CD4-positive, alpha-beta T cell (primary cell): ENCODE measurements at regions of chr11 and their contacts with region 1.

Region 1: DNA sequence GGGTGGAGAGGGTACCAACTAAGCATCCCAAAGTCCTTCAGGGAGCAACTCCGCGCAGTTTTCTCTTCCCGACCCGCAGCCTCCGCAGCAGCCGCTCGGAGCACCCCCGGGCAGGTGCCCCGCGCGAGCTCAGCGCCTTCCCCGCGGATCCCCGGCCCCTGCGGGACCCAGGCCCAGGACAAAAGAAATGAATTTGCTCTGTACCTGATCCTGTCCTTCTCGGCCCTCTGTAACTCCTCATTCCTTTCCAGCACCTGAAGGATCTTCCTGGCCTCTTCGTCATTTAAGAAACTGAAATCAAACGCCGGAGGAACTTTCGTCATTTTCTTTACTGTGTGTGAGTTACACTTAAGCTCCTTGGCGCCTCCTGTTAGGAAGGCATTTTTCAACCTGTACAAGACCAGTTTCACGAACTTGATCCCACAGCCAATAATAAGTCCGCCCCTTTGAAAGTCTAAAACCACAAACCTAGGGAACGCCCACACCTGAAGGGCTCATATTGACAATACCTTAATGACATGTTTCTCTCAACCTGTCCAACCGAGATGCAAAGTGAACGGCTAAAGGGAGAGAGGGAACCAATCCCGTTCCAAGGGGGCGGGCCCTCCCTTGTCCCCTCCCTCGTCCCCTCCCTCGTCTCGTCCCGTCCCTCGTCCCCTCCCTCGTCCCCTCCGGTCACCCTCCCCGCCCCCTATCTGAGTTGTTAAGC is at the start of gene EXPH5:
- DNase-seq: peak; percentile 66 to 96 (median 87)
- ATAC-seq: peak; percentile 92
- H3K4me3 ChIP-seq: peak within 1 kb of the TSS; percentile 84
- H3K4me3 Mint-ChIP-seq: peak within 1 kb of the TSS; percentile 99
- H3K27ac ChIP-seq: peak within 1 kb of the TSS in 1 of 2 donors; percentile 37
- H3K27ac Mint-ChIP-seq: peak within 1 kb of the TSS; percentile 83
- H3K4me1 ChIP-seq: peaks cover 15% of the 10 kb centered on the region
- H3K4me1 Mint-ChIP-seq: peaks cover 24% of the 10 kb centered on the region
- H3K27me3 ChIP-seq: no peaks in the 10 kb centered on the region
- H3K27me3 Mint-ChIP-seq: peaks cover 9% of the 10 kb centered on the region
- CTCF ChIP-seq: no peak
- total RNA-seq, gene EXPH5: 2.0 to 3.7 TPM

Region 2: DNA sequence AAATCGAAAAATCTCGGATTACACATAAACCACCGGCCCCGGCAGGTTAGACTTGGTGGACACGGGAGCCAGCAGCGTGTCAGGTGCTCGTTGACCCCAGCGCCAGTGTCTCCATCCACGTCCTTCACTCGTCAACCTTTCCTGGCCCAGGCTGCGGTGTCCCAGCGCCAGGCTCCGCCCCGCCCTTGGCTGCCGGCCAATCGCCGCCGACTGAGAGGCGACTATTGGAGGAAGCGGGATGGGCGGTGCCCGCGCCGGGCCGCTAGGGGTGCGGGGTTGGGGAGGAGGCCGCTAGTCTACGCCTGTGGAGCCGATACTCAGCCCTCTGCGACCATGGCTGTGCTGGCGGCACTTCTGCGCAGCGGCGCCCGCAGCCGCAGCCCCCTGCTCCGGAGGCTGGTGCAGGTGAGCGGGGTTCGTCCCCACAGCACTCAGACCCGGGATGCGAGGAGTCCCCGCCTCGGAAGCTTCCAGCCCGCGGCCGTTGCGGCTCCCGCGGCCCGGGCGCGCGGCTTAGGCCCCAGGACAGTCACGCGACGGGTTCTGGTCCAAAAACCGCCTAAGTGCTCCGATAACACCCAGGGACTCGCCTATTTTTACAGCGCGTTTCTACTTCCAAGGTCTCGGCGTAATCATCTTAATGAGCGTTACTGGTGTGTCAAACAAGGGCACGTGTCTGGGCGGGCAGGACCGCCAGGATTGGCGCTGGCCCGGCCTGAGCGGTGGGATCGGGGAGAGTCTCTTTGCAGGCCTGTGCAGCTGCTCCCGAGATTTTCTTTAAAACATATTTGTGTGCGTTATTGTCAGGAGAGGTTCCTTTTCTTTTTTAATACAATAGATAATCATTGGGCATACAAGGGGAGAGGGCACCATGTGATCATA is 471.9 kb before region 1 on chr11 and contains the start of gene ACAT1:
- CTCF ChIA-PET with region 1: no interaction called
- POLR2A ChIA-PET with region 1: interaction called, 4 read pairs
- intact Hi-C with region 1: loop called in 1 of 2 experiments (anchors 5 kb)
- DNase-seq: peak; percentile 91 to 98 (median 96)
- ATAC-seq: peak; percentile 98
- H3K4me3 ChIP-seq: peak within 1 kb of the TSS; percentile 84
- H3K4me3 Mint-ChIP-seq: peak within 1 kb of the TSS; percentile 89
- H3K27ac ChIP-seq: peak within 1 kb of the TSS in 1 of 2 donors; percentile 46
- H3K27ac Mint-ChIP-seq: peak within 1 kb of the TSS; percentile 53
- H3K4me1 ChIP-seq: peaks cover 40% of the 10 kb centered on the region
- H3K4me1 Mint-ChIP-seq: peaks cover 42% of the 10 kb centered on the region
- H3K27me3 ChIP-seq: no peaks in the 10 kb centered on the region
- H3K27me3 Mint-ChIP-seq: no peaks in the 10 kb centered on the region
- CTCF ChIP-seq: no peak
- total RNA-seq, gene ACAT1: 13.8 to 18.5 TPM

Region 3: DNA sequence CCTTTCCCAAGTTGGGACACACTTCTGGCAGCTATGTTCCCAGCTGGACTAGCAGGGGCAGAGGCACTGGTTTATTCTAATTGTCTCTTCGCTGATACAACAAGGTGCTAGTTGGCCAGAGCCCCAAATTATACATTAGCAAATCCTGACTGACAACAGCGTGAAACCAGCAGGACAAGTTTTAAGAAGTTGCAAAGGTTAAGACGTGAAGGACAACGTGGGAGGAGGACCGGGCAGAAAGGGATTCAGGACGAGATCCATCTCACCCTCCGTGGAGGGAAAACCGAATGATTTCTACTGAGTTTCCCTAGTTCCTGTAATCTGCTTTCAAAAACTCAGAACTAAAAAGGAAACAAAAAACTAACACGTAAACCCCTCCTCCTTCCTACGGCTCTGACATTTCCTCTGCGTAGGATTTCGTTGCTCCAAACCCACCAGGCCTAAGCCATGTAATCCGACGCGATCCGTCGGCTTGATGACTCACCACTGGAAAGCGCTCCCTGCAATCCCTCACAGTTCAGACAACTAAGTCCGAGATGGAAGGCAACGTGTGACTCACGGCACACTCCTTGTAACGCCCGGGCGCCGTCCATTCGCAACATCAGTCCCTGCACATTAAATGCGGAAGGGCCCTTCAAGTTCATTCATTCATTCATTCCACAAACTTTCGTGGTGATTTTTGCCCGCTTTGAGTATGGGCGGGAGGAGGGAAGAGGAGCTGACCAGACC is 95.9 kb before region 1 on chr11:
- CTCF ChIA-PET with region 1: no interaction called
- POLR2A ChIA-PET with region 1: interaction called, 7 read pairs
- intact Hi-C with region 1: loop called (anchors 2 to 5 kb)
- DNase-seq: peak; percentile 28 to 92 (median 60)
- ATAC-seq: peak; percentile 89
- H3K4me3 ChIP-seq: peak overlapping the region; percentile 77
- H3K4me3 Mint-ChIP-seq: peak overlapping the region; percentile 95
- H3K27ac ChIP-seq: peak overlapping the region; percentile 66 to 91
- H3K27ac Mint-ChIP-seq: peak overlapping the region; percentile 96
- H3K4me1 ChIP-seq: peaks cover 15% of the 10 kb centered on the region
- H3K4me1 Mint-ChIP-seq: peaks cover 27% of the 10 kb centered on the region
- H3K27me3 ChIP-seq: no peaks in the 10 kb centered on the region
- H3K27me3 Mint-ChIP-seq: no peaks in the 10 kb centered on the region
- CTCF ChIP-seq: no peak

Region 4: GRCh38 chr11:108559340-108559739 is 34.0 kb before region 1 on chr11:
- CTCF ChIA-PET with region 1: no interaction called
- POLR2A ChIA-PET with region 1: no interaction called
- intact Hi-C with region 1: loop called in 1 of 2 experiments (anchors 1 kb)
- DNase-seq: peak in 1 of 14 experiments; percentile 46
- ATAC-seq: peak; percentile 85
- H3K4me3 ChIP-seq: no peak overlapping the region
- H3K4me3 Mint-ChIP-seq: no peak overlapping the region
- H3K27ac ChIP-seq: no peak overlapping the region
- H3K27ac Mint-ChIP-seq: peak overlapping the region; percentile 2
- H3K4me1 ChIP-seq: peaks cover 3% of the 10 kb centered on the region
- H3K4me1 Mint-ChIP-seq: peaks cover 24% of the 10 kb centered on the region
- H3K27me3 ChIP-seq: no peaks in the 10 kb centered on the region
- H3K27me3 Mint-ChIP-seq: no peaks in the 10 kb centered on the region
- CTCF ChIP-seq: no peak

Region 5: DNA sequence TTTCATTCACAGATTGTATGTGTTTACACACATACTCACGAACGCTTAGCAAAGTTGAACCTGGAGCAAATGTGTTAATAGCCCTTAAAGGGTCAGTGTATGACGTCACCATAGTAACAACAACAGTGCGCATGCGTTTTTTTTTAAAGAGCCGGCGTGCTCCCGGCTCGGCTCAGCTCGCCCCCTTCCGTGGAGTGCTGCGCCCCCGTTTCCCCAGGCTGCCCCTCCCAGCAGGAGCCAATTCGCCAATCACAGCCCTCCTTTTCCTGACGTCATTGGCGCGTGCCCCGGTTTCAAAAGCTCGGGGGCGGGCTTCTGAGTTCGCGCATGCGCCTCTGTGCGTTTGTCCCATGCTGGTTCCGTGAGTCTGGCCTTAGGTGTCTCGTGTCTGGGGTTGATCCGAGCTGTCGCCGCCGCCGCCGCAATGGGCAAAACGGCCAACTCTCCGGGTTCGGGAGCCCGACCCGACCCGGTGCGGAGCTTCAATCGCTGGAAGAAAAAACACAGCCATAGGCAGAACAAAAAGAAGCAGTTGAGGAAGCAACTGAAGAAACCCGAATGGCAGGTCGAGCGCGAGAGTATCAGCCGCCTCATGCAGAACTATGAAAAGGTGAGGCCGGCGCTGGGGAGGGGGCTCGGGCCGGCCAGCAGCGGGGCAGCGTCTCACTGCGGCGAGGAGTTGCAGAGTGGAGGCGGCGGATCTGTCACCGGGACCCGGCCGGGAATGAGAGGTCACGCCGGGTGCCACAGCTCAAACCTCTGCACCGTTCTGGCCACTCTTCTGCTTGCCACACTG is 71.6 kb after region 1 on chr11 and contains the start of gene DDX10:
- CTCF ChIA-PET with region 1: interaction called, 4 read pairs
- POLR2A ChIA-PET with region 1: interaction called, 9 read pairs
- intact Hi-C with region 1: loop called in 1 of 2 experiments (anchors 5 kb)
- DNase-seq: peak; percentile 96 to 99 (median 98)
- ATAC-seq: peak; percentile 99
- H3K4me3 ChIP-seq: peak within 1 kb of the TSS; percentile 72
- H3K4me3 Mint-ChIP-seq: peak within 1 kb of the TSS; percentile 98
- H3K27ac ChIP-seq: peak within 1 kb of the TSS; percentile 32 to 55
- H3K27ac Mint-ChIP-seq: peak within 1 kb of the TSS; percentile 89
- H3K4me1 ChIP-seq: peaks cover 19% of the 10 kb centered on the region
- H3K4me1 Mint-ChIP-seq: peaks cover 42% of the 10 kb centered on the region
- H3K27me3 ChIP-seq: no peaks in the 10 kb centered on the region
- H3K27me3 Mint-ChIP-seq: no peaks in the 10 kb centered on the region
- CTCF ChIP-seq: no peak
- total RNA-seq, gene DDX10: 15.0 to 15.4 TPM